ENCODE measurements at regions of chr7 and their contacts with region 1.

Region 1: GRCh38 chr7:77247206-77247850 is 47.7 kb upstream of the FGL2 start:
- DNase-seq: peak; percentile 75 to 90
- ATAC-seq: no peak
- H3K4me3 ChIP-seq: no peak overlapping the region
- H3K27ac ChIP-seq: no peak overlapping the region
- H3K4me1 ChIP-seq: peaks cover 3 to 4% of the 10 kb centered on the region in 2 donors
- H3K27me3 ChIP-seq: no peaks in the 10 kb centered on the region

Region 2: DNA sequence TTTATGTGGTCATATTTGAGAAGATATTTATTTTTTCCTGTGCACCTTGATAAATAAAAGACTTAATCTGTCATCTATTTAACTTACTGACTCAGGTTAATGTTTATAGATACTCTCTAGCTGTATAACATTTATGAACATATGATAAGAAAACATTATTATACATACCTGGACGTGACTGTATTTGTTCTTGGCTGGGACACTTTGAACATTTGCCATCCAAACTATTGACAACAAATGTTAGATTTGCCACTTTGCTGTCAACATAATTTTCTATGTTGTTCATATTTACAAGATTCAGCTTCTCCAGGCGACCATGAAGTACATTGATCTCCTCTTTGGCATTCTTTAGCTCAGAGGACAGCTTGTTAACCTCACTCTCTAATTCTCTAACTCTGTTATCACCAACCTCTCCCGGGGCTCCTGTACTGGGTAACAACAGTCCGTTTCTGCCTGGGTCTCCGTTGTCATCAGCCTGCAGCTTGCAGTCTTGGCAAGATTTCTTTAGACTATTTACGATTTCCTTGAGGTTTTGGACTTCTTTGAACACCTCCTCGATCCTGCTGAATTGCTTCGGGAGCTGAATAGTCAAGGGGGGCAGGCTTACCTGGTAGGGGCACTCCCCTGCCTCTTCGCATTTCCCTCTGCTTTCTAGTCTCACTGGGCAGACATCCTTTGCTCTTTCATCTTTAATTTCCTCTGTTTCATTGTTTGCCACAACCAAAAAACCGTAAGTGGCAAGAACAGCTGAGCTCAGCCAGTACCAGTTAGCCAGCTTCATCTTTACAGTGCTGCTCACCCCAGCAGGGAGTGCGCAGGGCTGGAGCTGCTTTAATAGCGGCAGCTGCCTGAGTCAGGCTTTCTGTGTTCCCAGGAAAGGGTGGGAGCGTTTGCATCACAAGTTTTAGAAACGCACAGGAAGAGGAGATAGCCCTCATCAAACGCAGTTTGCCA is 48.0 kb before region 1 on chr7 and contains the start of gene FGL2:
- intact Hi-C with region 1: loop called in 1 of 2 experiments (anchors 5 kb)
- DNase-seq: peak; percentile 85 to 91
- ATAC-seq: peak; percentile 93
- H3K4me3 ChIP-seq: peak within 1 kb of the TSS; percentile 84 to 98
- H3K27ac ChIP-seq: peak within 1 kb of the TSS; percentile 33 to 95
- H3K4me1 ChIP-seq: peaks cover 0 to 2% of the 10 kb centered on the region in 2 donors
- H3K27me3 ChIP-seq: no peaks in the 10 kb centered on the region
- total RNA-seq, gene FGL2: 208 to 246 TPM

Region 3: GRCh38 chr7:77326696-77327628 is 79.6 kb after region 1 on chr7:
- intact Hi-C with region 1: loop called (anchors 5 kb)
- DNase-seq: peak in 1 of 2 donors; percentile 57
- ATAC-seq: peak; percentile 48
- H3K4me3 ChIP-seq: no peak overlapping the region
- H3K27ac ChIP-seq: peak overlapping the region in 1 of 2 donors; percentile 19
- H3K4me1 ChIP-seq: peaks cover 0 to 16% of the 10 kb centered on the region in 2 donors
- H3K27me3 ChIP-seq: no peaks in the 10 kb centered on the region

Region 4: DNA sequence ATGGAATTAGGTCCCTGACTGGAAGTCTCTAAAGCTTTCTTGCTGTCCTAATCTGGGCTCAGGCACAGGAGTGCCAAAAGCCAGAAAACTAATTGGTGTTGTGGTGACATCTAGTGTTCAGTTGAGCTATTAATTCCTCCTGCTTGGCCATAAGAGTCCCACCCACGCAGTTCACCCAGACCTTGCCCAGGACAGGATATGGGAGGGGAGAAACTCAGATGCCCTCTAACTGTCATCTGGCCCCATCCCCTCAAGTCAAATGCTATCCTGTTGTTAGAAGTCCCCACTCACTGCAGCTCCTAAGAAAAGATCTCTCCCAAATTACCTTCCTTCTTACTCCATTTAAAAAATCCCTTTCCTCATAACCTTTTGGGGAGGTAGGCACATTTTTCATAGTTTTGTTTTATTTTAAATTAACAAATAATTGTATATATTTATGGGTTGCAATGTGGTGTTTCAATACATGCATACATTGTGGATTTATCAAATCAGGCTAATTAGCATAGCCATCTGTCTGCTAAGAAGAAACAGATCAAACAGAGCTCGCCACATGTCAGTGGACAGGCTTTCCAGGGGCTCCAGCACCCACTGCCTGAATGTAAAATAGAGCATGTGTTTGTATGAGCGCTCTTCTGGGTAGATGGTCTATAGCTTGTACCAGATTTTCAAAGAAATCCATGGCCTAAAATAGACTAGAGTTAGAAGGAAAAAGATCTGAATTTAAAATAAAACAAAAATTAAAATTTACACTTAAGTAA is 84.8 kb after region 1 on chr7:
- intact Hi-C with region 1: loop called (anchors 5 kb)
- DNase-seq: peak; percentile 72 to 74
- ATAC-seq: peak; percentile 92
- H3K4me3 ChIP-seq: no peak overlapping the region
- H3K27ac ChIP-seq: no peak overlapping the region
- H3K4me1 ChIP-seq: peaks cover 2 to 14% of the 10 kb centered on the region in 2 donors
- H3K27me3 ChIP-seq: no peaks in the 10 kb centered on the region

Measured in aorta (tissue), 5 donors.